ENCODE measurements at regions of chr19 and their contacts with region 1.

Region 1: DNA sequence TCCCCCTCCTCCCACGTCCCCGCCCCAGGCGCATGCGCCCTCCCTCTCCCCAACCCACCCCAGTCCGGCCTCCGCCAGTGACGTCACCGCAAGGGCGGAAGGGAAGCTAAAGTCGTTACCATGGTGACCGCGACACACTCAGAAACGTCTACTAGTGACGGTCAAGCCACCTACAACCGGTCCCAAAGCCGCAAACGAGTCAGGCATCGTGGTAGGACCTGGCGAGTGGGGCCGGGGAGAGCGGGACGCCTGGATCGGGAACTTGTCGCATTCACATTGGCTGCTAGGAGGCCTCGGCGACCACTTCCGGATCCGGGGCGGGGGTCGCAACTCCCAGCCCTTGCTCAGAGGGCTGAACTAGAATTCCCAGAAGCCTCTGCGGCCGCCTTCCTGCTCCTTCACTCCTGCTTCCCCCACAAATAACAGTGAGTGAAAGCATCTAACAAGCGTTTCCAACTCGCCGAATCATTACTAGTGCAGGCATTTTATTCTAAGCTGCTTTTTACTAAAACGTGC is at the start of gene ZSCAN5A:
- DNase-seq: peak; percentile 95
- CTCF ChIP-seq: no peak

Region 2: DNA sequence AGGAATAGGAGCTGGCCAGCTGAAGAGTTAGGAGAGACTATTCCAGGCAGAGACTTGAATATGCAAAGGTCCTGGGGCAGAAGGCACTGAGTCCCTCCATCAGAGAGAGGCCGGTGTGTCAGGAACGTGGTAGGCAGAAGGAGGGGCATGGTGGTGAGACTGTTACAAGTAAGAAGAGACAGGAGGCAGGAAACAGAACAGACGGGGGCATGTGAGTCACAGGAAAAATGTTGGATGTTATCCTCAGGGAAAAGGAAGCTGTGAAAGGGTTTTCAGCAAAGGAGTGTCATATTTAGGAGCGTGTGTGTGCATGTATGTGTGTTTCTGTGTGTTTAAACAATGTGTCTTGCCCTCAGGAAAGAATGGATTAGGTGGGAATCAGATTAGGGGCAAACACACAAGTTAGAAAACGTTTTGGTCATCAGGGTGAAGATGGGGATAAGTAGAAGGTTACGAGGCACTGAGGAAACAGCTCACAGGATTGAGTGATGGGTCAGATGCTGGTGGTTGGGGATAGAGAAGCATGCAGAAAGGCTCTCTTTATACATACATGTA is 41.0 kb before region 1 on chr19:
- CTCF ChIA-PET with region 1: interaction called, 12 read pairs
- POLR2A ChIA-PET with region 1: interaction called, 7 read pairs
- DNase-seq: no peak
- CTCF ChIP-seq: no peak

Region 3: GRCh38 chr19:56291867-56292266 is 22.8 kb before region 1 on chr19:
- CTCF ChIA-PET with region 1: interaction called, 20 read pairs
- POLR2A ChIA-PET with region 1: no interaction called
- DNase-seq: no peak
- CTCF ChIP-seq: no peak

Region 4: DNA sequence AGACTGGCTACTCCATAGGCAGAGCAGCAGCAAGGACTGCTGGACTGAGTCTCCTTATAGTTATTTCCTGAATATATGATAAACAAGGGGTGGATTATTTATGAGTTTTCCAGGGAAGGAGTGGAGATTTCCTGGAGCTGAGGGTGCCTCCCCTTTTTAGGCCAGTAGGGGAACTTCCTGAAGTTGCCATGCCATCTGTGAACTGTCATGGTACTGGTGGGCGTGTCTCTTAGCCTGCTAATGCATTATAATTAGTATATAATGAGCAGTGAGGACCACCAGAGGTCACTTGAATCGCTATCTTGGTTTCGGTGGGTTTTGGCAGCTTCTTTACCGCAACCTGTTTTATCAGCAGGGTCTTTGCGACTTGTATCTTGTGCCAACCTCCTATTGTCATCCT is 13.4 kb before region 1 on chr19:
- CTCF ChIA-PET with region 1: interaction called, 30 read pairs
- POLR2A ChIA-PET with region 1: interaction called, 3 read pairs
- DNase-seq: no peak
- CTCF ChIP-seq: no peak

Measured in GM10248 (cell line).